A673 (cell line): ENCODE measurements at regions of chr13 and their contacts with region 1.

Region 1: GRCh38 chr13:110610955-110611595 is 4.3 kb upstream of the NAXD start:
- DNase-seq: peak; percentile 22
- H3K4me3 ChIP-seq: peak overlapping the region; percentile 22
- H3K27ac ChIP-seq: no peak overlapping the region
- H3K4me1 ChIP-seq: no peaks in the 10 kb centered on the region
- H3K27me3 ChIP-seq: no peaks in the 10 kb centered on the region
- CTCF ChIP-seq: no peak

Region 2: DNA sequence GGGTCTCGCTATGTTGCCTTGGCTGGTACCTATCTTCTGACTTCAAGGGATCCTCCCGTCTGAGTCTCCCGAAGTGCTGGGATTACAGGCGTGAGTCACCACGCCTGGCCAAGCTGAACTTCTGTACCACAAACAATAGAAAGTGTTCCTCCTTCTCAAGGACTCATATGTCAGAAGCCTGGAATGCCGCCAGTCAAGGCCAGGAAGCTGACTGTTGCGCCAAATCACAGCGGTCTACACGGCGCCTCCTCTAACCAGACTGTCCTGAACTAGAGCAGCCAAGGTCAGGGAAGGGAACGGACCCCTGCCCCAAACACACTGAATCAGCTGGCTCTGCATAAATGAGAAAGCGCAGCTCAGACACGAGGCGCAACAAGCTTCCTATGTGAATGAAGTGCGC is 64.1 kb before region 1 on chr13:
- CTCF ChIA-PET with region 1: no interaction called
- POLR2A ChIA-PET with region 1: no interaction called
- intact Hi-C with region 1: loop called (anchors 2 kb)
- DNase-seq: peak; percentile 53
- H3K4me3 ChIP-seq: no peak overlapping the region
- H3K27ac ChIP-seq: no peak overlapping the region
- H3K4me1 ChIP-seq: no peaks in the 10 kb centered on the region
- H3K27me3 ChIP-seq: no peaks in the 10 kb centered on the region
- CTCF ChIP-seq: no peak